AG04449 (cell line): ENCODE measurements at regions of chr2 and their contacts with region 1.

Region 1: DNA sequence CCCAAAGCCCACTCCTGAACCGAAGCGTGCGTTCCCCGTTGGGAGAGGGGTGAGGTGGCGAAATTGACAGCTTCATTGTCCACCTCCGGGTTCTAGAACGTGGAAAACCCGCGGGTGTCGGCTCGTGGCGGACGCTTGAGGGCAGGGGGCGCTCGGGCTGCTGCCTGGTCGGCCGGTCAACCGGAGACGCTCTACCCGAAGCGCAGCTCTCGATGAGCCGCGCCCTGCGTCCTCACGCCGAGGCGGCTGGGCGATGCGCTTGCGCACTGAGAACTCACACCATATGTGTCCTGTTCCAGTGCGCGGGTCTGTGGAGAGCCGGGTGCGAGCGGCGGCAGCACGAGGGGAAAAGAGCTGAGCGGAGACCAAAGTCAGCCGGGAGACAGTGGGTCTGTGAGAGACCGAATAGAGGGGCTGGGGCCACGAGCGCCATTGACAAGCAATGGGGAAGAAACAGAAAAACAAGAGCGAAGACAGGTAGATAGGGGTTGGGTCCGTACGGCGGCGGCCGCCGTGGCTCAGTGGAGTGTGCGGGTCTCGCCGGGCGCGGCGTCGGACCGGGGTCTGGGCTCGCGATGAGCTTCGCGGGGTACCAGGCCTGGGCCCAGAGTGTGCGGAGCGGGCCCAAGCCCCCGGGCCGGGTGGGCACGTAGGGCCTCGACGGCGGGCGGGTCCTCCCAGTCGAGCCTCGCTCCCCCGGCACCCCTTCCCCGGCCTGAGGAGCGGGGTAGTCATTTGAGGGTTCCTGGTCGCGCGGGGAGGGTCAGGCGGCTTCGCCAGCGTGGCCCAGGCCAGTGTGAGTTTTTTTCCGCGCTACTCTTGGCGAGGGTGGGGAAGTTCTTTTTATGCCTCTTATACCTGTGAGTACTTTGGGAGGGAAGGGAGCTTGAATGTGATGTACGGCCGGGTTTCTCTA is at the start of gene EIF5B:
- DNase-seq: peak; percentile 70
- H3K4me3 ChIP-seq: peak within 1 kb of the TSS; percentile 94
- CTCF ChIP-seq: peak; percentile 91

Region 2: GRCh38 chr2:99180755-99181623 is 156.4 kb before region 1 on chr2 and contains the starts of genes MITD1 and MRPL30:
- CTCF ChIA-PET with region 1: interaction called, 12 read pairs
- POLR2A ChIA-PET with region 1: interaction called, 16 read pairs
- DNase-seq: peak; percentile 81
- H3K4me3 ChIP-seq: peak within 1 kb of the TSS; percentile 99
- CTCF ChIP-seq: no peak

Region 3: DNA sequence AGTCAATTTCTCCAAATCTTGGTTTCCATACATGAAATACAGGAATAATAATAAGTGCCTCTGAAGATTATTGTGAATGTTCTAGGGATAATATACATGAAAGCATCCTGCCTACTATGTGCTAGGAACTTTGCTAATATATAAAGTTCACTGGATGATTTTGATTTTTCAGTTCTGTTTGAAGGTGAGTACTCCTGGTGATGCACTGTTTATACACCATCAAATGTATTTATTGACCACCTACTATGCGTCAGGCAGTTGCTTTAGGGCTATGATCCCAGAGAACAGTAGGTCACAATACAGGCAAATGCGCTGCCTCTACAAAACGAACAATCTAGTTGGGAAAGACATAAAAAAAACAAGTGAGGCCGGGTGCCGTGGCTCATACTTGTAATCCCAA is 12.0 kb before region 1 on chr2:
- CTCF ChIA-PET with region 1: interaction called, 19 read pairs
- POLR2A ChIA-PET with region 1: interaction called, 10 read pairs
- DNase-seq: no peak
- H3K4me3 ChIP-seq: no peak overlapping the region
- CTCF ChIP-seq: no peak

Region 4: GRCh38 chr2:99348173-99348572 is 10.8 kb after region 1 on chr2:
- CTCF ChIA-PET with region 1: interaction called, 14 read pairs
- POLR2A ChIA-PET with region 1: interaction called, 3 read pairs
- DNase-seq: no peak
- H3K4me3 ChIP-seq: no peak overlapping the region
- CTCF ChIP-seq: no peak

Region 5: DNA sequence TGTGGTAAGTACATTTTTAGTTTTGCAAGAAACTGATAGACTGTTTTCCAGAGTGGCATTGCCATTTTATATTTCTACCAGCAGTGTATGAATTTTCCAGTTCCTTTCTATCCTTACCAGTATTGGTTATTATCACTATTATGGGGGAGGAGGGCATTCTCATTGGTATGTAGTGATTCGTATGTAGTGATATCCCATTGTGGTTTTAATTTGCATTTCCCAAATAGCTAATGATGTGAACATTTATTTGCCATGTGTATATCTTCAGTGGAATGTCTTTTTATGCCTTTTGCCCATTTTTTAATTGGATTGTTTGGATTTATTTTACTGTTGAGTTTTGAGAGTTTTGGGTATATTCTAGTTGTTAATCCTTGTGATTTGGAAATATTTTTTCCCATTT is 16.7 kb after region 1 on chr2:
- CTCF ChIA-PET with region 1: interaction called, 11 read pairs
- POLR2A ChIA-PET with region 1: interaction called, 3 read pairs
- DNase-seq: no peak
- H3K4me3 ChIP-seq: no peak overlapping the region
- CTCF ChIP-seq: no peak

Region 6: DNA sequence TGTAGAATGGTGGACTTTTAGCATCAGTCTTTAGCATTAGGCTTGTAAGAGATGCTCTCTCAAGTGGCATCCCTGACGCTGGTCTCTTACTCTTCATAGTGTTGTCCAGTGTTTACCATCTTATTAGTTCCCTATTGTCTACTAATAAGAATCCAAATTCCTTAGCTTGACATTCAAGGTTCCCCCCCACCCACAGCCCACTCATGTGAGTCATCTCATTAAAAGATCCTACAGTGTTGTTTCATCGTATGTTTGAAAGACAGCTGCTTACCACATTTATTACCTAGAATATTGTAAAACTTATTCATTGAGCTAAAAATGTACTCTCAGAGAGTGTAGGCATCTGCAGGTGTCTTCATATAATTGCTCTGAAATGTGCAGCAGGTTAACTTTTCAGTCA is 28.3 kb after region 1 on chr2:
- CTCF ChIA-PET with region 1: interaction called, 17 read pairs
- POLR2A ChIA-PET with region 1: no interaction called
- DNase-seq: no peak
- H3K4me3 ChIP-seq: no peak overlapping the region
- CTCF ChIP-seq: no peak

Region 7: GRCh38 chr2:99471654-99472599 is 134.6 kb after region 1 on chr2:
- CTCF ChIA-PET with region 1: no interaction called
- POLR2A ChIA-PET with region 1: no interaction called
- DNase-seq: no peak
- H3K4me3 ChIP-seq: no peak overlapping the region
- CTCF ChIP-seq: no peak

Region 8: DNA sequence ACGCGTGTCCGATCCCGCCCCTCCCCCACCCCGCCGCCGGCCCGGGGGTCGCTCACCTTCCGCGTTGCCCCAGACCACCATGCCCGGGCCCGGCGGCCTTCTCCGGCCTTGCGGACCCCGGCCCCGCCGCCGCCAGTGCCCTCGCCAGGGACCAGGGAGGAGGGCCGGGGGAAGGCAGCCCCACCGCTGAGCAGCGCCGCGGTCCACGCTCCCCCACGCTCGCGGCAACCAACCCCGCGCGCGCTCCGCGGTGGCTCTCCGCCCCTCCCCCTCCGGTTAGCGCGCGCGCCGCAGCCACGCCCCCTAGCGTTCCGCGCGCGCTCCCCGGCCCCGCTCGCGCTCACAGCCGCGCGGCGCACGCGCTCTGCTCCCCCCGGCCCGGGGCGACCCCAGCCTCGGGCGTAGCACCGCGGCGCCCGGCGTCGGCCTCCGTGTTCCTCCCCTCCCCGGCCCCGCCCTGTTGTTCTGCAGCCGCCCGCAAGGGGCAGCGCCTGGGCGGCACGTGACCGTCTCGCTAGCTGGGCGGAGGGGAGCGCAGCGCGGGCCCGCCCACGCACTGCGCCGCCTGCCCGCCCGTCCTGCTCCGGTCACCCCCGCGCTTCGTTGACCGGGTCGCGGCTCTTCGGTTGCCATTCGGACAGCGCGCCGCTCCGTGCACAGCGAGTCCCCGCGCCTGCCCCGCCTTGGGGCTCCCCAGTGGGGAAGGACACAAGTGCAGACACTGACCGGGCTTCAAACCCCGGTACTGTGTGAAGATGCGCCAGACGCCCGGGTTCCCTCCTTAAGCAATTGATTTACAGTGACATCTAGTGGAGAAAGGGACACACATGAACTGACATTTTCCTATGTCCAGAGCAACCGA is 152.6 kb after region 1 on chr2 and contains the start of gene REV1:
- CTCF ChIA-PET with region 1: interaction called, 13 read pairs
- POLR2A ChIA-PET with region 1: no interaction called
- DNase-seq: peak; percentile 74
- H3K4me3 ChIP-seq: peak within 1 kb of the TSS; percentile 88
- CTCF ChIP-seq: peak; percentile 73